ENCODE measurements at regions of chr12 and their contacts with region 1.

Region 1: DNA sequence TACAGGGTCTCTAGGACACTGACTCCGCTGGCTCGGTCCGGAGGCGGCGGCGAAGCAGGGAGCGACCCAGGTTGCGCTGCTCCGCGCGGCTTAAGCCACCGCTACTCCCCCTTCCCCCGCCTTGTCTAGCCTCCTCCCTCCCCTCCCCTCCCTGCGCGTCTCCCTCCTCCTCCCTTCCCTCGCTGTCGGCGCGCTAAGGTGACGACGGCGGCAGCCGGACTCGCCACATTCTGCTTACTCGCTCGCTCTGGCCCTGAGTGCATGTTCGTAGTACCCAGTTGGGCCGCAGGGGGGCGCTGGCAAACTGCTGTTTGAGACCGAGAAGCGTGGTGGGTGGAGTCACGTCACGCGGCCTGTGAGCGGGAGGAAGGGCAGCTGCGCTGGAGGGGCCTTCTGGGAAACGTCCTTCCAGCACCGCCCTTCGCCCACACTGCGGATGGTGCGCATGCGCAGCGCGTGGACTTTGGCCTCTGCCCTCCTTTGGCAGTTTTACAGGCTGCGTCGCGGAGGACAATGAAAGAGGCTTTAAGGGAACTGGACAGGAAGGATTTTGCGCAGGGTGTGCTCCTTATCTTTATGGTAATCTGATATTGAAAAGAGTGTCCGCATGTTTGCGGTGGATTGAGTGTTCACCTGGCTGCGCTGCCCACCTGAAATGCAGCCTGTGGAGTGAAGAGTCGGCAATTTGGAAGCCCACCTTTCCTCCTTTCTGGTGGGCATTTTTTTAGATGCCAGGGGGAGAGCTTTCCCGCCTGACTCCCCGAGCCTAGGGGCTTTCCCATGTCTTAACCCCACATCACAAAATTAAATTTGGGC is at the start of gene SCAF11:
- DNase-seq: peak; percentile 100
- ATAC-seq: peak; percentile 80
- H3K4me3 ChIP-seq: peak within 1 kb of the TSS; percentile 89 to 95
- H3K4me3 Mint-ChIP-seq: peak within 1 kb of the TSS; percentile 93
- H3K27ac ChIP-seq: peak within 1 kb of the TSS; percentile 97
- H3K27ac Mint-ChIP-seq: peak within 1 kb of the TSS; percentile 97
- H3K4me1 ChIP-seq: peaks cover 42% of the 10 kb centered on the region
- H3K4me1 Mint-ChIP-seq: peaks cover 51% of the 10 kb centered on the region
- H3K27me3 ChIP-seq: no peaks in the 10 kb centered on the region
- H3K27me3 Mint-ChIP-seq: no peaks in the 10 kb centered on the region
- CTCF ChIP-seq: peak; percentile 75
- total RNA-seq, gene SCAF11: 204 to 218 TPM

Region 2: DNA sequence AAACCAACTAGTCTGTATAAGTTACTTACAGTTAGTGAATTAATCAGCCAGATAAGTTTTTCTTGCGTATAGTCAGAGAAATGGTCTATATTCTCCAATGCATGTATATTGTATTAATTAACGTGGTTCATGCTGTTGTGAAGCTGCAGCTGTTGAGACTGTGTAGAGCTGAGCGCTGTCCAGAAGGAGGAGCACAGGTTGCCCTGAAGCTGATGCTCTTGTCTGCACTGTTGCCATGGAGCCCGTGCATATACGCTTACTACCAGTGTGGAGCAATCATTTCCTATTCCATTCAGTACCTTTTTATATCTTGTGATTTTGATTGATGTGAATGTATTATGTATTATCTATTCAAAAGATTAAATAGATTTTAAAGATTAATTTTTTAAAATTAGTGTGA is 335.5 kb before region 1 on chr12:
- CTCF ChIA-PET with region 1: no interaction called
- POLR2A ChIA-PET with region 1: no interaction called
- intact Hi-C with region 1: loop called in 1 of 2 experiments (anchors 5 kb)
- DNase-seq: peak; percentile 28 to 86 (median 63)
- ATAC-seq: peak; percentile 100
- H3K4me3 ChIP-seq: no peak overlapping the region
- H3K4me3 Mint-ChIP-seq: no peak overlapping the region
- H3K27ac ChIP-seq: no peak overlapping the region
- H3K27ac Mint-ChIP-seq: no peak overlapping the region
- H3K4me1 ChIP-seq: no peaks in the 10 kb centered on the region
- H3K4me1 Mint-ChIP-seq: peaks cover 5% of the 10 kb centered on the region
- H3K27me3 ChIP-seq: peaks cover 0 to 2% of the 10 kb centered on the region in 2 experiments
- H3K27me3 Mint-ChIP-seq: no peaks in the 10 kb centered on the region
- CTCF ChIP-seq: peak; percentile 52

Region 3: GRCh38 chr12:46124848-46125619 is 134.4 kb after region 1 on chr12:
- CTCF ChIA-PET with region 1: interaction called, 3 read pairs
- POLR2A ChIA-PET with region 1: interaction called, 4 read pairs
- intact Hi-C with region 1: loop called (anchors 5 to 10 kb)
- DNase-seq: peak; percentile 9 to 86 (median 53)
- ATAC-seq: peak; percentile 96
- H3K4me3 ChIP-seq: no peak overlapping the region
- H3K4me3 Mint-ChIP-seq: peak overlapping the region; percentile 7
- H3K27ac ChIP-seq: no peak overlapping the region
- H3K27ac Mint-ChIP-seq: peak overlapping the region; percentile 70
- H3K4me1 ChIP-seq: no peaks in the 10 kb centered on the region
- H3K4me1 Mint-ChIP-seq: peaks cover 4% of the 10 kb centered on the region
- H3K27me3 ChIP-seq: no peaks in the 10 kb centered on the region
- H3K27me3 Mint-ChIP-seq: peaks cover 7% of the 10 kb centered on the region
- CTCF ChIP-seq: peak; percentile 69

Region 4: DNA sequence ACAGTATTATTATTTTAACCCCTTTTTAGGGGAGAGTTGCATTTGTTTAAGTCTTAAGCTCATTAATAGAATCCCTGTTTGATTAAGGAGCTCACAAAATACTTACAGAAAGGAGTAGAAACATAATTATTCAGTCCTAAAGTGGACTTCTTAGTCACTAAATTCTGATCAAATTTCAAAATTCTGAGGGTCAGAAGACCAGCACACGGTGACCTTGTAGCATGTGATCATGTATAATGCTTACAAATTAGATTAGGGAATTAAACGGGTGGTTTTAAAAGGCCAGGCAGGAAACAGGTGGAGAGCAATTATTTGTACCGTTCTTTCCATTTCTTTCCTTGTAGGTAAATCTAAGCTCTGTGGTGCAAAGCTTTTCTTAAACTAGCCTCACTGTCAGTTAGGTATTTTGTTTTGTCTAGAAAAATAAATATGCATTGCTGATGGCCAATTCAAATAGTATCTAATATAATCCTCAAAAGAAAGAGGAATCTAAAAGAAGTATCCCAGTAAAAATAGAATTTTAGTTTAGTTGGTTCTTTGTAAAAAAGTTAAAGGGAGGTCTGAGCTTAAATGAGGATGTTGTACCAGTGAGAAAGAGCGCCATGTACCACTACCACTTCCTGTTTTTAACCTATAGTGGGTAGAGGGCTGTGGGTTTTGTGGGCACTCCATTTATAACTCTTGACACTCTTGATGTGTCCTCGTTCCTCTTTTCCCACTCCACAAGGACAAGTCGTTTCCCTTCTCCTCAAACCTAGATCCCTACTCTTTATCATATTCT is 227.1 kb after region 1 on chr12:
- CTCF ChIA-PET with region 1: no interaction called
- POLR2A ChIA-PET with region 1: interaction called, 3 read pairs
- intact Hi-C with region 1: loop called (anchors 5 kb)
- DNase-seq: peak in 8 of 9 experiments; percentile 44 to 88 (median 66)
- ATAC-seq: peak; percentile 11
- H3K4me3 ChIP-seq: peak overlapping the region; percentile 34 to 47
- H3K4me3 Mint-ChIP-seq: peak overlapping the region; percentile 79
- H3K27ac ChIP-seq: peak overlapping the region; percentile 83 to 92
- H3K27ac Mint-ChIP-seq: peak overlapping the region; percentile 98
- H3K4me1 ChIP-seq: peaks cover 98% of the 10 kb centered on the region
- H3K4me1 Mint-ChIP-seq: peaks cover 96% of the 10 kb centered on the region
- H3K27me3 ChIP-seq: no peaks in the 10 kb centered on the region
- H3K27me3 Mint-ChIP-seq: no peaks in the 10 kb centered on the region
- CTCF ChIP-seq: no peak

Region 5: GRCh38 chr12:46372544-46373110 is 382.0 kb after region 1 on chr12 and contains the start of gene SLC38A2:
- CTCF ChIA-PET with region 1: no interaction called
- POLR2A ChIA-PET with region 1: interaction called, 5 read pairs
- intact Hi-C with region 1: loop called (anchors 1 kb)
- DNase-seq: peak; percentile 94 to 99 (median 97)
- ATAC-seq: peak; percentile 84
- H3K4me3 ChIP-seq: peak within 1 kb of the TSS; percentile 93 to 96
- H3K4me3 Mint-ChIP-seq: peak within 1 kb of the TSS; percentile 89
- H3K27ac ChIP-seq: peak within 1 kb of the TSS; percentile 88 to 93
- H3K27ac Mint-ChIP-seq: peak within 1 kb of the TSS; percentile 98
- H3K4me1 ChIP-seq: peaks cover 38% of the 10 kb centered on the region
- H3K4me1 Mint-ChIP-seq: peaks cover 50% of the 10 kb centered on the region
- H3K27me3 ChIP-seq: no peaks in the 10 kb centered on the region
- H3K27me3 Mint-ChIP-seq: no peaks in the 10 kb centered on the region
- CTCF ChIP-seq: no peak
- total RNA-seq, gene SLC38A2: 268 to 279 TPM

Region 6: DNA sequence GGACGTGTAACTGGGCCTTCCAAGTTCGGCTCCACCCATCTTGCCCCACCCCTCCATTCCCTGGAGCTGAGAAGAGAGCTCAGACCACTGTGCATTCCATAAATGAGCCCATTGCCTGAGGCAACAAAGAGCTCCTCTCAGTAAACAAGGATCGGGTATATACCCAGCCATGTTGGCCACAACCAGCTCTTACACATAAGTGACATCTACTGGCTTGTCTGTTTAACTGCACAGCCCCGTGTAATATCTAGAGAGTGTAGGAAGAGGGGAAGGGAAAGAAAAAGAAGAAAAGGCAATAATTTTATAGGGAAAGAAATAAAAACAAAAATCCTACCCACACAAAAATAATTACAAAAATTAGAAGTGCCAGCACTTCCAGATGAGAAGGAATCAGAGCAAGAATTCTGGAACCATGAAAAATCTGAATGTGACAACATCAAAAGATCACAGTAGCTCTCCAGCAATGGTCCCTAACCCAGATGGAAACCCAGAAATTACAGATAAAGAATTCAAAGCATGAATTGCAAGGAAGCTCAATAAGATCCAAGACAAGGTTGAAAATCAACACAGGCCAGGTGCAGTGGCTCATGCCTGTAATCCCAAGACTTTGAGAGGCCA is 1407.1 kb after region 1 on chr12:
- CTCF ChIA-PET with region 1: no interaction called
- POLR2A ChIA-PET with region 1: no interaction called
- intact Hi-C with region 1: loop called in 1 of 2 experiments (anchors 10 kb)
- DNase-seq: peak in 5 of 9 experiments; percentile 35 to 80 (median 50)
- ATAC-seq: peak; percentile 82
- H3K4me3 ChIP-seq: no peak overlapping the region
- H3K4me3 Mint-ChIP-seq: no peak overlapping the region
- H3K27ac ChIP-seq: peak overlapping the region in 1 of 2 experiments; percentile 44
- H3K27ac Mint-ChIP-seq: peak overlapping the region; percentile 84
- H3K4me1 ChIP-seq: peaks cover 43% of the 10 kb centered on the region
- H3K4me1 Mint-ChIP-seq: peaks cover 58% of the 10 kb centered on the region
- H3K27me3 ChIP-seq: no peaks in the 10 kb centered on the region
- H3K27me3 Mint-ChIP-seq: no peaks in the 10 kb centered on the region
- CTCF ChIP-seq: peak; percentile 74

Measured in CD8-positive, alpha-beta T cell (primary cell).